GM12878 (cell line): ENCODE measurements at regions of chr11 and their contacts with region 1.

Region 1: DNA sequence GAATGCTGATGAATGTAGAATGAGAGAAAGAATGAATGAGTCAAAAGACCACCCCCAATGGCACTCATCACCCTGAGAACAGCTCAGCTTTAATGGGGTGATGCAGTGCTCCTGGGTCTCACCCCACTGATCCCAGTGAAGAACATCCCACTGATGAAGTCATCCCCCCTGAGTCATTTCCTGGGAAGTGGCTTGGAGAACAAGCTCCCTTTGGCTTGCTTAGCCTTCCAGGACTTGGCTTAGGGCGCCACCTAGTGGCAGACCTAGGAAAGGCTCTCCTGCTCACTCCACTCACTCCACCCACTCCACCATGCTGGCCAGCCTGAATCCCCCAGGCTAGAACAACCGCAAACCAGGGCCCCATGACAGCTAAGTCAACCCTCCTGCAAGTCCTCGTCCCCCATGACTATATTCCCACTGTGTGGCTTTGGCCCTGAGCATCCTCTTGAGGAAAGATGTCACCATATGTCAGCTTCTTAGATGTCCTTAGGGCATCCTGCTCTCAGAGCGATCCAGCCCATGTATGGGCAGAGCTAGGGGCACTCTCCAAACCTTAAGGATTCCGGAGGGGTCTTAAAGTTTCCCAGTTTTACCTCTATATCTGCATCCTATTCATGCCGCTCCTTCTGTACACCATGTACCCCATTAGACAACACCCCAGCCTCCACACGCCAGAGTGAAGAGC is 17.8 kb upstream of the TMPRSS13 start:
- DNase-seq: no peak
- ATAC-seq: peak; percentile 76
- H3K4me3 ChIP-seq: no peak overlapping the region
- H3K27ac ChIP-seq: no peak overlapping the region
- H3K4me1 ChIP-seq: peaks cover 39% of the 10 kb centered on the region
- H3K27me3 ChIP-seq: no peaks in the 10 kb centered on the region
- CTCF ChIP-seq: peak; percentile 95 to 96 (median 95)
- EP300 ChIP-seq: no peak
- POLR2A ChIP-seq: no peak
- RAD21 ChIP-seq: peak; percentile 94

Region 2: DNA sequence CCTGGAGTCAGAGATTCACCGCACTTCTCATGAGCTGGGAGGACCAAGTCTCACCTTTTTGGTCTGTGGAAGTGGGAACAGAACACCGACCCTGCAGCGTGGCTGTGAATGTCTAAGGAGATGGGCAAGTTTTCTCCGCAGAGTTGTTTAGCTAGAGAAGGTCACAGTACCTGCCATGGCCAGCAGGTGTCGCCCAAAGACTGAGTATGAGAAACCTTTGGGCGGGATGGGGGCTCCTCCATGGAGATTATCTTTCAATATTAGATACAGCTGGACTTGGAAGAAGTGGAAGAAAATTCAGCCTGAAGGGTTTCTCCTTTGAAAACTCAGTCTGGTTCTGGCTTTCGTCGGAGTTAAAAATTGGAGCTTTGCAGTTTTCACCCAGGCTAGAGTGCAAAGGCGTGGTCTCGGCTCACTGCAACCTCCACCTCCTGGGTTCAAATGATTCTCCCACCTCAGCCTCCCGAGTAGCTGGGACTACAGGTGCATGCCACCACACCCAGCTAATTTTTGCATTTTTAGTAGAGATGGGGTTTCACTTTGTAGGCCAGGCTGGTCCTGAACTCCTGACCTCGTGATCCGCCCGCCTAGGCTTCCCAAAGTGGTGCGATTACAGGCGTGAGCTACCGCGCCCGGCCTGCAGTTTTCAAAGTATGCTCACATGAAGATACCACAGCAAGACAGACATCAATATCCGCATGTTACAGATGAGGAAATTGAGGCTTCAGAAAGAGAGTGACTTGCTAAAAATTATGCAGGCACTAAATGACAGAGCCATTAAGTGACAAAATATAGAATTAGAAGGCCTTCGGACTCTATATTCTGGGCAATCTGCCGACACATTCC is 139.3 kb before region 1 on chr11:
- CTCF ChIA-PET with region 1: interaction called, 131 read pairs
- POLR2A ChIA-PET with region 1: interaction called, 4 read pairs
- RAD21 ChIA-PET with region 1: interaction called, 73 read pairs
- SMC1A ChIA-PET with region 1: interaction called, 64 read pairs
- in situ Hi-C with region 1: no loop called
- intact Hi-C with region 1: no loop called
- DNase-seq: no peak
- ATAC-seq: peak; percentile 85
- H3K4me3 ChIP-seq: no peak overlapping the region
- H3K27ac ChIP-seq: no peak overlapping the region
- H3K4me1 ChIP-seq: peaks cover 17% of the 10 kb centered on the region
- H3K27me3 ChIP-seq: no peaks in the 10 kb centered on the region
- CTCF ChIP-seq: peak; percentile 86 to 91 (median 89)
- EP300 ChIP-seq: no peak
- POLR2A ChIP-seq: no peak
- RAD21 ChIP-seq: peak; percentile 95

Region 3: DNA sequence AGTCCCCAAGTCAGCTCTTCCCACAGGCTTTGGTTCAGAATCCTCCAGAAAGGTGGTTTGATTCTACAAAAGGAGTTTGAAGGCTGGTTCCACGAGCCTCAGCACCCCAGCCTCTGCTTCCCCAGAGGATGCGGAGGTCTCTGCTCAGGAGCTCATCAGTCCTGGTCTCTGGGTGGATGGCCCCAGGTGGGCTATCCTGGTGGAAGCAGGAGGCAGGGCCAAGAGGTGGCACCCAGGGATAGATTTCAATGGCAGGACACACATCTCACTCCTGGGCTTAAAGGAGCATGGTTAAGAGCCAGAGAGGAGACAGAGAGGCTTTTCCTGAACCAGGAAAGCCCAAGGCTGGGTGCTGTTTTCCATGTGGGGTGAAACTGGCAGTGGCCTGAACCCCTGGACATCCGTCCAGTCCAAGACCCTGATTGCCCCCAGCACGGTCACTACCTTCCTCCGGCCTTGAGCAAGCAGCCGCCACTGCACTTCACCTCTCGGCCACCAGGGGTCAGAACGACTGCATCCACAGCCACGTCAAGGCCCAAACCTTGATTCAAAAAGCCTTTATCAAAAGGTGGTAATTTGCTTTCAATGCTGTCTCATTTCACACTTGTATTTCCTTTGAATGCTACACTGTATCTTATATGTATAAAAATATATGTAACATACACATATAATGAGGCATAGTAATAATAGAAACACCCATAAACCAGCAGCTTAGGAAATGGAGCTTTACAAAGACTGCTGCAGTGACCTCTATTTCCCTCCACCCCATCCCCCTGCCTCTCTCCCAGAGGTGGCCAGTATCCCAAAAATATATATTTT is 103.1 kb before region 1 on chr11:
- CTCF ChIA-PET with region 1: interaction called, 238 read pairs
- POLR2A ChIA-PET with region 1: interaction called, 4 read pairs
- RAD21 ChIA-PET with region 1: interaction called, 135 read pairs
- SMC1A ChIA-PET with region 1: interaction called, 163 read pairs
- in situ Hi-C with region 1: loop called (anchors 5 kb)
- intact Hi-C with region 1: loop called (anchors 1 kb)
- DNase-seq: no peak
- ATAC-seq: peak; percentile 89
- H3K4me3 ChIP-seq: no peak overlapping the region
- H3K27ac ChIP-seq: no peak overlapping the region
- H3K4me1 ChIP-seq: no peaks in the 10 kb centered on the region; the same call in 1 of the 2 replicates
- H3K27me3 ChIP-seq: no peaks in the 10 kb centered on the region
- CTCF ChIP-seq: peak; percentile 94 to 98 (median 97)
- EP300 ChIP-seq: no peak
- POLR2A ChIP-seq: no peak
- RAD21 ChIP-seq: peak; percentile 87

Region 4: GRCh38 chr11:117914219-117914761 is 32.7 kb before region 1 on chr11:
- CTCF ChIA-PET with region 1: interaction called, 83 read pairs
- POLR2A ChIA-PET with region 1: interaction called, 3 read pairs
- RAD21 ChIA-PET with region 1: interaction called, 13 read pairs
- SMC1A ChIA-PET with region 1: interaction called, 30 read pairs
- in situ Hi-C with region 1: no loop called
- intact Hi-C with region 1: no loop called
- DNase-seq: no peak
- ATAC-seq: no peak
- H3K4me3 ChIP-seq: no peak overlapping the region
- H3K27ac ChIP-seq: no peak overlapping the region
- H3K4me1 ChIP-seq: peaks cover 1% of the 10 kb centered on the region; the same call in 1 of the 2 replicates
- H3K27me3 ChIP-seq: no peaks in the 10 kb centered on the region
- CTCF ChIP-seq: no peak
- EP300 ChIP-seq: no peak
- POLR2A ChIP-seq: no peak
- RAD21 ChIP-seq: no peak

Region 5: DNA sequence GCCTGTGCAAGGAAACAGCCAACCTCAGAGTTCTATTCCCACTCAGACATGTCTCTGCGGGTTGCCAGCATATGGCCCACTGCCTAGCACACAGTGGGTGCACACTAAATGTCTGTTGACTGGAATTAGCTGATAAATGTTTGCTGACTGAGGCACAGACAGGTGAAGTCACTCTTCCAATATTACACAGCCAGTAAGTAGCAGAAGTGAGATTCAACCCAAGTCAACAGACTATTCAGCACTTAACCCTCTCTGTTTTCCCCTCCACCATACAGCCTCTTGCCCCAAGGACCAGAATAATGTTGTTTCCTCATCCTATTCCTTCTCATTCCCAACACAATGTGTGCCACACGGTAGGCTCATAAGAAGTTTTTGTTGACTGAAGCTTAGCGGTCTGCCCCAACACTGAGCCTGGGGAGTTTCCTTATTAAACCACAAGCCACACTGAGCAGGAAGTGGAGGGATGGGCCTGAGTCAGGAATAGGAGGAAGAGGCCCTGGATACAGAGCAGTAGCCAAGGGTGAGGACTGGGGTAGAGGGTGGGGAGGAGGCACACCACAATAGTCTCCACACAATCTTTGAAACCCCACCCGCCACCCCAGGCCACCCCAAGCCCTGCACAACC is 23.5 kb after region 1 on chr11:
- CTCF ChIA-PET with region 1: interaction called, 23 read pairs
- POLR2A ChIA-PET with region 1: interaction called, 5 read pairs
- RAD21 ChIA-PET with region 1: interaction called, 17 read pairs
- SMC1A ChIA-PET with region 1: interaction called, 17 read pairs
- in situ Hi-C with region 1: no loop called
- intact Hi-C with region 1: no loop called
- DNase-seq: no peak
- ATAC-seq: peak; percentile 77
- H3K4me3 ChIP-seq: no peak overlapping the region
- H3K27ac ChIP-seq: no peak overlapping the region
- H3K4me1 ChIP-seq: peaks cover 13% of the 10 kb centered on the region
- H3K27me3 ChIP-seq: no peaks in the 10 kb centered on the region
- CTCF ChIP-seq: no peak
- EP300 ChIP-seq: no peak
- POLR2A ChIP-seq: no peak
- RAD21 ChIP-seq: no peak

Region 6: GRCh38 chr11:118010738-118011461 is 63.9 kb after region 1 on chr11:
- CTCF ChIA-PET with region 1: interaction called, 9 read pairs
- POLR2A ChIA-PET with region 1: interaction called, 5 read pairs
- RAD21 ChIA-PET with region 1: interaction called, 10 read pairs
- SMC1A ChIA-PET with region 1: interaction called, 7 read pairs
- in situ Hi-C with region 1: no loop called
- intact Hi-C with region 1: no loop called
- DNase-seq: peak; percentile 86
- ATAC-seq: peak; percentile 85
- H3K4me3 ChIP-seq: no peak overlapping the region
- H3K27ac ChIP-seq: peak overlapping the region; percentile 97
- H3K4me1 ChIP-seq: peaks cover 80% of the 10 kb centered on the region
- H3K27me3 ChIP-seq: no peaks in the 10 kb centered on the region
- CTCF ChIP-seq: no peak
- EP300 ChIP-seq: peak; percentile 100
- POLR2A ChIP-seq: no peak
- RAD21 ChIP-seq: 0 out of 2 replicates have a peak, but pooled peaks have one; percentile 15